H1 (cell line): ENCODE measurements at regions of chr2 and their contacts with region 1.

Region 1: GRCh38 chr2:205680067-205680466 is 2.2 kb upstream of the NRP2 start:
- DNase-seq: peak; percentile 86 to 89
- H3K4me3 ChIP-seq: no peak overlapping the region
- H3K27ac ChIP-seq: no peak overlapping the region
- H3K4me1 ChIP-seq: peaks cover 6 to 20% (median 13%) of the 10 kb centered on the region in 4 experiments
- H3K27me3 ChIP-seq: peaks cover 4 to 24% (median 20%) of the 10 kb centered on the region in 4 experiments; a peak in 6 of 7 replicates
- CTCF ChIP-seq: peak; percentile 41 to 88 (median 76)
- EP300 ChIP-seq: no peak
- POLR2A ChIP-seq: no peak
- RAD21 ChIP-seq: peak; percentile 85 to 87

Region 2: GRCh38 chr2:205323929-205324328 is 356.1 kb before region 1 on chr2:
- CTCF ChIA-PET with region 1: interaction called, 15 read pairs
- POLR2A ChIA-PET with region 1: no interaction called
- DNase-seq: no peak
- H3K4me3 ChIP-seq: no peak overlapping the region
- H3K27ac ChIP-seq: no peak overlapping the region
- H3K4me1 ChIP-seq: no peaks in the 10 kb centered on the region
- H3K27me3 ChIP-seq: no peaks in the 10 kb centered on the region
- CTCF ChIP-seq: peak in 2 of 3 experiments; percentile 35 to 56; a peak in 2 of 4 replicates
- EP300 ChIP-seq: no peak
- POLR2A ChIP-seq: no peak
- RAD21 ChIP-seq: peak; percentile 73 to 76

Region 3: GRCh38 chr2:205564346-205565151 is 115.5 kb before region 1 on chr2:
- CTCF ChIA-PET with region 1: interaction called, 15 read pairs
- POLR2A ChIA-PET with region 1: no interaction called
- DNase-seq: no peak
- H3K4me3 ChIP-seq: no peak overlapping the region
- H3K27ac ChIP-seq: no peak overlapping the region
- H3K4me1 ChIP-seq: no peaks in the 10 kb centered on the region
- H3K27me3 ChIP-seq: no peaks in the 10 kb centered on the region
- CTCF ChIP-seq: peak; percentile 5 to 41 (median 29); a peak in 3 of 4 replicates
- EP300 ChIP-seq: no peak
- POLR2A ChIP-seq: no peak
- RAD21 ChIP-seq: peak; percentile 20 to 47; a peak in 3 of 4 replicates

Region 4: GRCh38 chr2:205612636-205613035 is 67.4 kb before region 1 on chr2:
- CTCF ChIA-PET with region 1: interaction called, 16 read pairs
- POLR2A ChIA-PET with region 1: interaction called, 3 read pairs
- DNase-seq: no peak
- H3K4me3 ChIP-seq: no peak overlapping the region
- H3K27ac ChIP-seq: no peak overlapping the region
- H3K4me1 ChIP-seq: peaks cover 0 to 3% (median 2%) of the 10 kb centered on the region in 4 experiments; a peak in 2 of 7 replicates
- H3K27me3 ChIP-seq: no peaks in the 10 kb centered on the region; a peak in 1 of 7 replicates
- CTCF ChIP-seq: no peak
- EP300 ChIP-seq: no peak
- POLR2A ChIP-seq: no peak
- RAD21 ChIP-seq: no peak

Region 5: GRCh38 chr2:205644018-205644720 is 35.9 kb before region 1 on chr2:
- CTCF ChIA-PET with region 1: interaction called, 14 read pairs
- POLR2A ChIA-PET with region 1: interaction called, 3 read pairs
- DNase-seq: no peak
- H3K4me3 ChIP-seq: no peak overlapping the region
- H3K27ac ChIP-seq: no peak overlapping the region
- H3K4me1 ChIP-seq: peaks cover 0 to 12% (median 3%) of the 10 kb centered on the region in 4 experiments; a peak in 2 of 7 replicates
- H3K27me3 ChIP-seq: no peaks in the 10 kb centered on the region
- CTCF ChIP-seq: no peak
- EP300 ChIP-seq: no peak
- POLR2A ChIP-seq: no peak
- RAD21 ChIP-seq: no peak

Region 6: GRCh38 chr2:205696331-205696923 is 16.4 kb after region 1 on chr2:
- CTCF ChIA-PET with region 1: interaction called, 8 read pairs
- POLR2A ChIA-PET with region 1: interaction called, 11 read pairs
- DNase-seq: no peak
- H3K4me3 ChIP-seq: no peak overlapping the region
- H3K27ac ChIP-seq: no peak overlapping the region
- H3K4me1 ChIP-seq: peaks cover 5 to 18% (median 13%) of the 10 kb centered on the region in 4 experiments
- H3K27me3 ChIP-seq: no peaks in the 10 kb centered on the region
- CTCF ChIP-seq: peak; percentile 28 to 53 (median 39); a peak in 3 of 4 replicates
- EP300 ChIP-seq: no peak
- POLR2A ChIP-seq: no peak
- RAD21 ChIP-seq: peak; percentile 60 to 72